Posterior cingulate gyrus (tissue), 11 donors: ENCODE measurements at regions of chr12 and their contacts with region 1.

Region 1: DNA sequence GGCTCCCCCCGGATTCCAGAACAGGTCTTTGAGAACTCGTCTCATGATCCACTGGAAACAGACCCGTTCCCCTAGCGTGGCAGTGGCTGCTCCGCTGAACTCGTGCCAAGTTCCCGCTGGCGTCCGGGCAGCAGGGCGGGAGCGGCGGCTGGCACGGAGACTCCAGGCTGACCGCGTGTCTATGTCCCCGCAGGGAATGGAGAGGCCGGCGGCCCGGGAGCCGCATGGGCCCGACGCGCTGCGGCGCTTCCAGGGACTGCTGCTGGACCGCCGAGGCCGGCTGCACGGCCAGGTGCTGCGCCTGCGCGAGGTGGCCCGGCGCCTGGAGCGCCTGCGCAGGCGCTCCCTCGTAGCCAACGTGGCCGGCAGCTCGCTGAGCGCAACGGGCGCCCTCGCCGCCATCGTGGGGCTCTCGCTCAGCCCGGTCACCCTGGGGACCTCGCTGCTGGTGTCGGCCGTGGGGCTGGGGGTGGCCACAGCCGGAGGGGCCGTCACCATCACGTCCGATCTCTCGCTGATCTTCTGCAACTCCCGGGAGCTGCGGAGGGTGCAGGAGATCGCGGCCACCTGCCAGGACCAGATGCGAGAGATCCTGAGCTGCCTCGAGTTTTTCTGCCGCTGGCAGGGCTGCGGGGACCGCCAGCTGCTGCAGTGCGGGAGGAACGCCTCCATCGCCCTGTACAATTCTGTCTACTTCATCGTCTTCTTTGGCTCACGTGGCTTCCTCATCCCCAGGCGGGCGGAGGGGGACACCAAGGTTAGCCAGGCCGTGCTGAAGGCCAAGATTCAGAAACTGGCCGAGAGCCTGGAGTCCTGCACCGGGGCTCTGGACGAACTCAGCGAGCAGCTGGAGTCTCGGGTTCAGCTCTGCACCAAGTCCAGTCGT is 1.5 kb downstream of the APOLD1 start:
- DNase-seq: peak; percentile 63 to 96 (median 73)

Region 2: DNA sequence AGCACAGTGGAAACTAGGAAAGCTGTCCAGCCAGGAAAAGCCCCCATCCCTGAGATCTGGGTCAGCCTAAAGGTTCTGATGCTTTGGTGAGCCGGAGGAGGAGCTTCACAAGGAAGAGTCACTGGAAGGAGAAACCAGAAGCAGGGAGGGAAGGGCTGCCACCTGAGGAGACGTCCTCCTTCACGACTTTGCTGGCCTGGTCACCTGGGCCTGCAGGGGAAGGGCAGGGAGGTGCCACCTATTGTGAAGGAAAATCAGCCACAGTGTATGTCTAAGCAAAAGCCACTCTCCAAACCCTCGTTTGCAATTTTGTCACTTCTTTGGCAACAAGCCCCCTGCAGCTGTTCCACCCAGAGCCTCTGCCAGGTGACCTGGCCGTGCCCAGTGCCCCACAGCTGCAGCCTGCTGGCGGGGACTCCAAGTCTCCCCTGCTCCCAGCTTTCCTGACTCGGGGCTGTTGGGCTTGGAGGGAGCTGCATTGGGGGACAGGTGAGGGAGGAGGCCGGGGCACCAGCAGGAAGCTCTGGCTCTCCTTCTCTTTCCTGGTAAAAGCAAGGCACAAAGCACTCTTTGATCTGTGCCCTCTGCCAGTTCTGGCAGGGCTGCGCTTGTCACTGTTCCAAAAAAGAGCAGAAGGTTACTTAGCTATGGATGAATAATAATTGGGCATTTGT is 837.1 kb before region 1 on chr12:
- intact Hi-C with region 1: no loop called
- DNase-seq: peak in 3 of 10 donors; percentile 26 to 87 (median 76)

Region 3: GRCh38 chr12:12686925-12687324 is 100.0 kb before region 1 on chr12:
- intact Hi-C with region 1: no loop called
- DNase-seq: no peak

Region 4: GRCh38 chr12:12724661-12725545 is 62.1 kb before region 1 on chr12:
- intact Hi-C with region 1: loop called (anchors 5 kb)
- DNase-seq: peak; percentile 77 to 98 (median 86)

Region 5: GRCh38 chr12:12813120-12814101 is 26.5 kb after region 1 on chr12 and contains the start of gene DDX47:
- intact Hi-C with region 1: loop called (anchors 2 kb)
- DNase-seq: peak; percentile 89 to 99 (median 96)

Region 6: GRCh38 chr12:13079440-13079906 is 292.5 kb after region 1 on chr12:
- intact Hi-C with region 1: no loop called
- DNase-seq: no peak

Region 7: GRCh38 chr12:13316587-13317246 is 529.8 kb after region 1 on chr12:
- intact Hi-C with region 1: no loop called
- DNase-seq: no peak